Heart right ventricle (tissue), 16 donors: ENCODE measurements at regions of chr13 and their contacts with region 1.

Region 1: GRCh38 chr13:23871616-23872220 is 17.5 kb downstream of the MIPEP start:
- DNase-seq: no peak
- ATAC-seq: peak in 2 of 8 donors; percentile 35 to 44
- H3K4me3 ChIP-seq: no peak overlapping the region
- H3K27ac ChIP-seq: no peak overlapping the region
- H3K4me1 ChIP-seq: no peaks in the 10 kb centered on the region
- H3K27me3 ChIP-seq: no peaks in the 10 kb centered on the region
- CTCF ChIP-seq: peak; percentile 33 to 81 (median 62)

Region 2: DNA sequence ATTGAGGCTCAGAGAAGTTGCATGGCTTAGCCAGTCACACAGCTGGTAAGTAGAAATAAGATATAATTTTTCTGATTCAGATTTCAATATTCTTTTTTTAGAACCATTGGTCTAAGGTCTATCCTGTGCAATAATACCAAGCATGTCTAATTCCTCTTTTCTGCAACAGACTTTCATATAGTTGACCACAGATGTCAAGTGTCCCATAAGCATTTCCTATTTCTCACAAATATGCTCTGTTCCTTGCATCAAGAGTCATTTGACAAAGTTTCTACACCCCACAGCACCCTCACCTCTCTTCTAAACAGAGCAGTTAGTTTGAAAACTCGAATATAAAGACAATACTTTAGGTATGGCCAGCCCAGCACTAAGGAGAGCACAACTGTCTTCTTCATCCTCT is 411.4 kb before region 1 on chr13:
- intact Hi-C with region 1: loop called in 4 of 10 experiments (anchors 5 to 10 kb)
- DNase-seq: no peak
- ATAC-seq: no peak
- H3K4me3 ChIP-seq: no peak overlapping the region
- H3K27ac ChIP-seq: no peak overlapping the region
- H3K4me1 ChIP-seq: peaks cover 0 to 31% (median 0%) of the 10 kb centered on the region in 9 donors
- H3K27me3 ChIP-seq: no peaks in the 10 kb centered on the region
- CTCF ChIP-seq: no peak

Region 3: GRCh38 chr13:23579072-23579895 is 292.4 kb before region 1 on chr13:
- intact Hi-C with region 1: loop called in 8 of 10 experiments (anchors 5 to 10 kb)
- DNase-seq: peak; percentile 93 to 95
- ATAC-seq: peak; percentile 98 to 99 (median 99)
- H3K4me3 ChIP-seq: peak overlapping the region; percentile 54 to 98 (median 87)
- H3K27ac ChIP-seq: peak overlapping the region; percentile 72 to 97 (median 90)
- H3K4me1 ChIP-seq: peaks cover 0 to 65% (median 15%) of the 10 kb centered on the region in 9 donors
- H3K27me3 ChIP-seq: peaks cover 0 to 24% (median 0%) of the 10 kb centered on the region in 7 donors
- CTCF ChIP-seq: no peak

Region 4: DNA sequence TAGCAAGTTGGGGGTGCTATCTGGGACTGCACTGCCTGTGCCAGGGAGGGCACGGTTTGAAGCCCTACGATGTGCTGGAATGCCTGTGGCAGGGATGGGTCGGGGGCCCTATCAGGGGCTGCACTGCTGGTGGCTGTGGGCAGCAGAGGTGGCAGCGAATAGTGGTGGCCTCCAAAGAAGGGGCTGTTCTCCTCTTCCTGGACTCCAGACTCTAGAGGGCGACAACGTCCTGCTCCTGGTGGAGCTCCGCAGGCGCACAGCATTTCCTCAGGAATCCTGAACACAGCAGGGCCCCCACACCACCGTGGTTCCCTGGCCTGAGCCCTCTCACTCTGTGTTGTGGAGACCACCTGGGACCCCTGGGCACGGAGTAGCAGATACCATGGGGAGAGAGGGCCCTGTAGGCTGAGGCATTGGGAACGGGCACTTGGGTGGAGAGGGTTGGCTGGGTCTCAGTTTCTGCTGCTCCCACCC is 155.9 kb before region 1 on chr13:
- intact Hi-C with region 1: loop called in 6 of 10 experiments (anchors 10 kb)
- DNase-seq: no peak
- ATAC-seq: peak in 6 of 8 donors; percentile 29 to 64 (median 44)
- H3K4me3 ChIP-seq: no peak overlapping the region
- H3K27ac ChIP-seq: no peak overlapping the region
- H3K4me1 ChIP-seq: no peaks in the 10 kb centered on the region
- H3K27me3 ChIP-seq: no peaks in the 10 kb centered on the region
- CTCF ChIP-seq: peak in 7 of 9 donors; percentile 13 to 39 (median 27)

Region 5: DNA sequence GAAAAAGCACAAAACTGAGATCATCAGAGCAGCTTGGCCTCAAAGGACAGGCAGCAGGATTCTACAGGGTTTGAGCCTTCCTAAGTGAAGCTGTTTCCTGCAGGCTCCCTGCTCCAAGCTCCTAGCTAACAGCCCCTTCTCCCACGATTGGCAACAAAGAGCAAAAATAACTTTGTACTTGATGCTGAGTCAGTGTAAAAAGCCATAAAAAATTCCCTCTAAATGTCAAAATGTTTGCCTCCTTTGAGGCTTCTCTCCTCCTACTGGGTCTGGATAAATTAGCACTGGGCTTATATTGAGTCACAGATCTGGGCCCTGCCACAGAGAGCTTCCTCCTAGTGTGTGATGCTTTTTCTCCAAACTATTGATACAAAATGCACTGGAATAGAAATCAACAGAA is 148.2 kb before region 1 on chr13:
- intact Hi-C with region 1: loop called in 6 of 10 experiments (anchors 10 kb)
- DNase-seq: no peak
- ATAC-seq: peak; percentile 11 to 65 (median 36)
- H3K4me3 ChIP-seq: no peak overlapping the region
- H3K27ac ChIP-seq: peak overlapping the region in 6 of 10 donors; percentile 13 to 61 (median 38)
- H3K4me1 ChIP-seq: peaks cover 0 to 7% (median 0%) of the 10 kb centered on the region in 9 donors
- H3K27me3 ChIP-seq: no peaks in the 10 kb centered on the region
- CTCF ChIP-seq: no peak